CD4-positive, alpha-beta memory T cell (primary cell): ENCODE measurements at regions of chr7 and their contacts with region 1.

Region 1: GRCh38 chr7:142535123-142535779 is 214.0 kb upstream of the PRSS1 start:
- DNase-seq: peak; percentile 57 to 80 (median 64)
- H3K4me3 ChIP-seq: peak overlapping the region in 1 of 2 donors; percentile 38
- H3K4me3 Mint-ChIP-seq: peak overlapping the region; percentile 61 to 86 (median 76)
- H3K27ac ChIP-seq: peak overlapping the region; percentile 49
- H3K27ac Mint-ChIP-seq: peak overlapping the region; percentile 32 to 94 (median 87)
- H3K4me1 ChIP-seq: peaks cover 28% of the 10 kb centered on the region
- H3K4me1 Mint-ChIP-seq: peaks cover 17 to 40% (median 23%) of the 10 kb centered on the region in 4 donors
- H3K27me3 ChIP-seq: no peaks in the 10 kb centered on the region
- H3K27me3 Mint-ChIP-seq: peaks cover 0 to 2% of the 10 kb centered on the region in 2 donors

Region 2: DNA sequence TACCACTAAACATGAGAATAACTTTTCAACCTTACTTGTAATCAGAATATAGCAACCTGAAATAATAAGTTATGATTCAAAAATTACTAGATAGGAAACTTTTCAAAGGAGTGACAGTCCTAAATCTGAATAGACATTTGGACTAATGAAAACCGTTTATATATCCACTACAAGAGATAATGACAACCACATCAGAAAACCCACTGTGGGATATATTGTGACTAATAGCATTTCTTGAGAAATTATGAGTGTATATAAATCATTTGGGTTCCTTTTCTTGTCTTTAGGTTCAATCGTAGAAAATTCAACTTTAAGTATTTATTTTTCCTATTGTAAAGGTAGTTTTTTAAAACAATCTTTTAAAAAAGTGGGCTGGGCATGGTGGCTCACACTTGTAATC is 107.2 kb before region 1 on chr7:
- CTCF ChIA-PET with region 1: no interaction called
- POLR2A ChIA-PET with region 1: no interaction called
- intact Hi-C with region 1: no loop called
- DNase-seq: no peak
- H3K4me3 ChIP-seq: no peak overlapping the region
- H3K4me3 Mint-ChIP-seq: no peak overlapping the region
- H3K27ac ChIP-seq: no peak overlapping the region
- H3K27ac Mint-ChIP-seq: no peak overlapping the region
- H3K4me1 ChIP-seq: peaks cover 3% of the 10 kb centered on the region
- H3K4me1 Mint-ChIP-seq: peaks cover 5 to 16% (median 8%) of the 10 kb centered on the region in 4 donors
- H3K27me3 ChIP-seq: no peaks in the 10 kb centered on the region
- H3K27me3 Mint-ChIP-seq: peaks cover 0 to 2% of the 10 kb centered on the region in 2 donors

Region 3: DNA sequence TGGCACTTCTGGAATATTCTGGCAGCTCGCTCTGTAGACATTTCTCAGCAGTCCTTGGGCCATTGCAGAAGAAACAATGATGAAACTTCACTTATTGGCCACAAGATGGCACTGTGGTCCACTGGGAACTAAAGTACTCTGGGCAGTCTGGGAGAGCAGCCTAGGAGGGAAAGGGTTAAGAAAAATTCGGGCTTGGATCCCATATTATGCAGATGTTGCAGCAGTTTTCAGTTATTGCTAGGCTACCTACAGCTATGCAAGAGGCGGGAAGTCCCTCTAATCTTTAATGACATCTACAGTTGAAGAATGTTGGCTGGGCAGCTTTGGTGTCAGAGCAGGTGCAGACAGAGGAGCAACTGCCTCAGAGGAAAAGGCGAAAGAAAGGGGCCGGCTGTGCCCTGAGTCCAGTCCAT is 75.7 kb before region 1 on chr7:
- CTCF ChIA-PET with region 1: interaction called, 10 read pairs
- POLR2A ChIA-PET with region 1: interaction called, 3 read pairs
- intact Hi-C with region 1: no loop called
- DNase-seq: peak in 4 of 5 donors; percentile 30 to 39 (median 34)
- H3K4me3 ChIP-seq: no peak overlapping the region
- H3K4me3 Mint-ChIP-seq: peak overlapping the region in 7 of 8 donors; percentile 2 to 69 (median 29)
- H3K27ac ChIP-seq: no peak overlapping the region
- H3K27ac Mint-ChIP-seq: peak overlapping the region in 6 of 7 donors; percentile 34 to 83 (median 58)
- H3K4me1 ChIP-seq: peaks cover 46% of the 10 kb centered on the region
- H3K4me1 Mint-ChIP-seq: peaks cover 35 to 68% (median 53%) of the 10 kb centered on the region in 4 donors
- H3K27me3 ChIP-seq: no peaks in the 10 kb centered on the region
- H3K27me3 Mint-ChIP-seq: no peaks in the 10 kb centered on the region

Region 4: DNA sequence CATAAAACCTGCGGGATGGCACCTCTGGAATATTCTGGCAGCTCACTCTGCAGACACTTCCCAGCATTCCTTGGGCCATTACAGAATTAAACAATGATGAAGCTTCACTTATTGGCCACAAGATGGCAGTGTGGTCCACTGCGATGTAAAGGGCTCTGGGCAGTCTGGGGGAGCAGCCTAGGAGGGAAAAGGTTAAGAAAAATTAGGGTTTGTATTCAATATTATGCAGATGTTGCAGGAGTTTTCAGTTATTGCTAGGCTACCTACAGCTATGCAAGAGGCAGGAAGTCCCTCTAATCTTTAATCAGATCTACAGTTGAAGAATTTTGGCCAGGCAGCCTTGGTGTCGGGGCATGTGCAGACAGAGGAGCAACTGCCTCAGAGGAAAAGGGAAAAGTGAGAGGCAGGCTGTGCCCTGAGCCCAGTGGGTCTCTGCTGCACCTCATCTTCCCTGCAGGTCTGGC is 19.2 kb before region 1 on chr7:
- CTCF ChIA-PET with region 1: interaction called, 10 read pairs
- POLR2A ChIA-PET with region 1: interaction called, 3 read pairs
- intact Hi-C with region 1: no loop called
- DNase-seq: peak in 4 of 5 donors; percentile 33 to 46 (median 44)
- H3K4me3 ChIP-seq: no peak overlapping the region
- H3K4me3 Mint-ChIP-seq: peak overlapping the region in 4 of 8 donors; percentile 18 to 75 (median 30)
- H3K27ac ChIP-seq: no peak overlapping the region
- H3K27ac Mint-ChIP-seq: peak overlapping the region in 3 of 7 donors; percentile 9 to 67 (median 57)
- H3K4me1 ChIP-seq: peaks cover 34% of the 10 kb centered on the region
- H3K4me1 Mint-ChIP-seq: peaks cover 12 to 50% (median 29%) of the 10 kb centered on the region in 4 donors
- H3K27me3 ChIP-seq: no peaks in the 10 kb centered on the region
- H3K27me3 Mint-ChIP-seq: no peaks in the 10 kb centered on the region

Region 5: DNA sequence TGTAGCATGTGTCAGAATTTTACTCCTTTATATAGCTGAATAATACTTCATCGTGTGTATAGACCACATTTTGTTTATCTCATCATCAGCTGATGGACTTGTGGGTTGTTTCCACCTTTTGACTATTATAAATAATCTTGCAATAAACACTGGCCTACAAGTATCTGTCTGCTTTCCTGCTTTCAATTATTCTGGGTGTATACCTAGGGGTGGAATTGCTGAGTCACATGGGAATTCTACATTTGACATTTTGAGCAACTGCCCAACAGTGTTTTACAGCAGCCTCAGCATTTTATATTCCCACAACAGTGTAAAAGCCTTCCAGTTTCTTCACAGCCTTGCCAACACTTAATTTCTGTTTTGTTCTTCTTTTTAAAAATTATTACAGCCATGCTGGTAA is 13.7 kb after region 1 on chr7:
- CTCF ChIA-PET with region 1: interaction called, 13 read pairs
- POLR2A ChIA-PET with region 1: interaction called, 13 read pairs
- intact Hi-C with region 1: loop called (anchors 2 kb)
- DNase-seq: no peak
- H3K4me3 ChIP-seq: no peak overlapping the region
- H3K4me3 Mint-ChIP-seq: no peak overlapping the region
- H3K27ac ChIP-seq: no peak overlapping the region
- H3K27ac Mint-ChIP-seq: no peak overlapping the region
- H3K4me1 ChIP-seq: no peaks in the 10 kb centered on the region
- H3K4me1 Mint-ChIP-seq: peaks cover 0 to 1% (median under 1%) of the 10 kb centered on the region in 4 donors
- H3K27me3 ChIP-seq: no peaks in the 10 kb centered on the region
- H3K27me3 Mint-ChIP-seq: peaks cover 0 to 2% of the 10 kb centered on the region in 2 donors

Region 6: GRCh38 chr7:142587578-142588191 is 52.4 kb after region 1 on chr7:
- CTCF ChIA-PET with region 1: interaction called, 16 read pairs
- POLR2A ChIA-PET with region 1: interaction called, 3 read pairs
- intact Hi-C with region 1: loop called (anchors 1 kb)
- DNase-seq: peak in 4 of 5 donors; percentile 25 to 35 (median 31)
- H3K4me3 ChIP-seq: no peak overlapping the region
- H3K4me3 Mint-ChIP-seq: peak overlapping the region in 4 of 8 donors; percentile 31 to 61 (median 44)
- H3K27ac ChIP-seq: no peak overlapping the region
- H3K27ac Mint-ChIP-seq: peak overlapping the region in 2 of 7 donors; percentile 12 to 21
- H3K4me1 ChIP-seq: no peaks in the 10 kb centered on the region
- H3K4me1 Mint-ChIP-seq: peaks cover 3 to 7% (median 4%) of the 10 kb centered on the region in 4 donors
- H3K27me3 ChIP-seq: no peaks in the 10 kb centered on the region
- H3K27me3 Mint-ChIP-seq: no peaks in the 10 kb centered on the region

Region 7: GRCh38 chr7:143229054-143229790 is 694.0 kb after region 1 on chr7:
- CTCF ChIA-PET with region 1: no interaction called
- POLR2A ChIA-PET with region 1: no interaction called
- intact Hi-C with region 1: no loop called
- DNase-seq: no peak
- H3K4me3 ChIP-seq: no peak overlapping the region
- H3K4me3 Mint-ChIP-seq: no peak overlapping the region
- H3K27ac ChIP-seq: no peak overlapping the region
- H3K27ac Mint-ChIP-seq: no peak overlapping the region
- H3K4me1 ChIP-seq: no peaks in the 10 kb centered on the region
- H3K4me1 Mint-ChIP-seq: no peaks in the 10 kb centered on the region
- H3K27me3 ChIP-seq: no peaks in the 10 kb centered on the region
- H3K27me3 Mint-ChIP-seq: no peaks in the 10 kb centered on the region